HCT116 (cell line): ENCODE measurements at regions of chr1 and their contacts with region 1.

Region 1: GRCh38 chr1:219066631-219067349 is 106.9 kb upstream of the LYPLAL1 start:
- DNase-seq: peak; percentile 33
- ATAC-seq: peak; percentile 77
- H3K4me3 ChIP-seq: no peak overlapping the region
- H3K27ac ChIP-seq: no peak overlapping the region
- H3K4me1 ChIP-seq: peaks cover 0 to 8% of the 10 kb centered on the region in 2 experiments; a peak in 1 of 4 replicates
- H3K27me3 ChIP-seq: no peaks in the 10 kb centered on the region
- CTCF ChIP-seq: peak; percentile 38 to 66 (median 60); a peak in 4 of 6 replicates
- POLR2A ChIP-seq: no peak
- RAD21 ChIP-seq: peak; percentile 77

Region 2: DNA sequence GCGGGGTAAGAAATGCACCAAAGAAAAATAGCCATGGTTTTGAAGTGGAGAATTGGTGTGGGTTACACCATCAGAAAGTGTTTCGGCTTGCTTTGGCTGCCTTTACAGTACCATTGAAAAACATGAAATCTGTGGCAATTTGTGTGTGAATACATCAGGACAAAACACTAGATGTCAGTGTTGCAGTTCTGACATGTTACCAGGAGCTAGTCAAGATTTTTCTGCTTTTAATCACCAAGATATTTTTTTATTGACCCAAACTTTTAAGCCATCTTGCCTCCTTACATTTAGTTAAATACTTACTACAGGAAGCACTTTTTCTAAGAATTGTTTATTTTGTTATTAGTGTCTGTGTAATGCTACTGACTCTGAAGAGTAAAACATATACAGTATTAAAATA is 767.4 kb before region 1 on chr1:
- CTCF ChIA-PET with region 1: interaction called, 5 read pairs
- POLR2A ChIA-PET with region 1: interaction called, 3 read pairs
- RAD21 ChIA-PET with region 1: interaction called in 1 of 2 experiments, 3 read pairs
- intact Hi-C with region 1: loop called (anchors 1 kb)
- DNase-seq: peak; percentile 28
- ATAC-seq: peak; percentile 70
- H3K4me3 ChIP-seq: no peak overlapping the region
- H3K27ac ChIP-seq: no peak overlapping the region
- H3K4me1 ChIP-seq: no peaks in the 10 kb centered on the region
- H3K27me3 ChIP-seq: no peaks in the 10 kb centered on the region
- CTCF ChIP-seq: peak; percentile 36 to 53 (median 44); a peak in 5 of 6 replicates
- POLR2A ChIP-seq: no peak
- RAD21 ChIP-seq: peak; percentile 60

Region 3: DNA sequence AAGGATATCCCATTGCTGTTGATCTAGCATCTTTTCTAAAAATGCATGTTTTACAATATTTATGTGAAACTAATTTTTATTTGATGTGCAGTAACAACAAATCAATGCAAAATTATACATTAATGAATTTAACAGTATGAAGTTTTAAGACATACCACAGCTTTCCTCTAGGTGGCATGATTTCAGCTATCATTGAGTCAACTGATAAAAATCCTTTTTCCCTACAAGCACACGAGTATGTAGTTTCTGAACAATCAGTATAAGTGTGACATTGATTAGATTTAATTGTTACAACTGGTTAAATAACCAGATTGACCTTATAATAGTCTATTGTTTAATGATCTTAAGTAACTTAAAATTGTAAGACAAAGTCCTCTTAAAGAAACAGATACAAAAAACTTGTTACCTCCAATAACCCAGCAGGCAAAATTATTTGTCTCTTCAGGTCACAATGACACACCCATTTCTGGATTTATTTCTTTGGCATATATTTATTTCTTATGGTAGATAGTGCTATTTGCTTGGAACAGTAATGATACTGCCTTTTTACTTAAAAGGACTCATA is 727.4 kb before region 1 on chr1:
- CTCF ChIA-PET with region 1: interaction called, 25 read pairs
- POLR2A ChIA-PET with region 1: no interaction called
- RAD21 ChIA-PET with region 1: no interaction called
- intact Hi-C with region 1: loop called (anchors 2 kb)
- DNase-seq: no peak
- ATAC-seq: 0 out of 2 replicates have a peak, but pooled peaks have one; percentile 36
- H3K4me3 ChIP-seq: no peak overlapping the region
- H3K27ac ChIP-seq: no peak overlapping the region
- H3K4me1 ChIP-seq: no peaks in the 10 kb centered on the region
- H3K27me3 ChIP-seq: no peaks in the 10 kb centered on the region
- CTCF ChIP-seq: peak; percentile 61 to 73 (median 65); a peak in 5 of 6 replicates
- POLR2A ChIP-seq: no peak
- RAD21 ChIP-seq: peak; percentile 81

Region 4: DNA sequence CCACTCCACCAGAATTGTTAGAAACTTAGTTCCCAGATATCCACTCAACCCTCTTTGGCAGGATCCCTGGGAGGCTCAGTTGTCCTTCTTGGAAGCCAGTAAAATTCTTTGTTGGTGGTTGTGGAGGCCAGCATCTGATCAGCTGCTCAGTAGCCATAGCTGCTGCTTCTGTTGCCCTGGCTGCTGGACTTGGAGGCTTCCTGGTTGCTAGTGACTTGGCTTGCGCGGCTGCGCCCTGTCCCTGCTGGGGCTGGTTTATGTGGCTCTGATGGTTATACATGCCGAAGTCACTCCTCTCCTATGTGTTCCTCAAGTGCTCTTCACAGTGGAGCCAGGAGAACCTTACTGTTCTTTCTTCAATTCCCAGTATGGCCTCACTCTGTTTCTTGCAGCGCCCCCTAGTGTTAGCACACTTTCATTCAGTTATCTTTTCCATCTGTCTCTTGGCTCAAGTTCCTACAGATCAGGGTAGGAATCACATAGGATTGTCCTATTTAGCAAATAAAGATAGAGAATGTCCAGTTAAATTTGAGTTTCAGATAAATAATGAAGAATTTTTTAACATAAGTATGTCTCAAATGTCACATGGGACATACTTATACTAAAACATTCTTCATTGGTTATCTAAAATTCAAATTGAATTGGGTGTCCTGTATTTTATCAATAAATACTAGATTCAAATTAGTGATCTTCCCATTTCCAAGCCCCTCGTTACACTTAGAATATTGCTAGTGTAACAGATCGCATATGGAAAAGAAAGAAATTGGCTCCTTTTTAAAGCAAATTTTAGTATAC is 545.2 kb before region 1 on chr1:
- CTCF ChIA-PET with region 1: interaction called, 3 read pairs
- POLR2A ChIA-PET with region 1: no interaction called
- RAD21 ChIA-PET with region 1: no interaction called
- intact Hi-C with region 1: loop called (anchors 5 kb)
- DNase-seq: peak; percentile 41
- ATAC-seq: peak; percentile 74
- H3K4me3 ChIP-seq: no peak overlapping the region
- H3K27ac ChIP-seq: no peak overlapping the region
- H3K4me1 ChIP-seq: no peaks in the 10 kb centered on the region
- H3K27me3 ChIP-seq: no peaks in the 10 kb centered on the region
- CTCF ChIP-seq: peak; percentile 51 to 93 (median 76)
- POLR2A ChIP-seq: no peak
- RAD21 ChIP-seq: peak; percentile 81

Region 5: DNA sequence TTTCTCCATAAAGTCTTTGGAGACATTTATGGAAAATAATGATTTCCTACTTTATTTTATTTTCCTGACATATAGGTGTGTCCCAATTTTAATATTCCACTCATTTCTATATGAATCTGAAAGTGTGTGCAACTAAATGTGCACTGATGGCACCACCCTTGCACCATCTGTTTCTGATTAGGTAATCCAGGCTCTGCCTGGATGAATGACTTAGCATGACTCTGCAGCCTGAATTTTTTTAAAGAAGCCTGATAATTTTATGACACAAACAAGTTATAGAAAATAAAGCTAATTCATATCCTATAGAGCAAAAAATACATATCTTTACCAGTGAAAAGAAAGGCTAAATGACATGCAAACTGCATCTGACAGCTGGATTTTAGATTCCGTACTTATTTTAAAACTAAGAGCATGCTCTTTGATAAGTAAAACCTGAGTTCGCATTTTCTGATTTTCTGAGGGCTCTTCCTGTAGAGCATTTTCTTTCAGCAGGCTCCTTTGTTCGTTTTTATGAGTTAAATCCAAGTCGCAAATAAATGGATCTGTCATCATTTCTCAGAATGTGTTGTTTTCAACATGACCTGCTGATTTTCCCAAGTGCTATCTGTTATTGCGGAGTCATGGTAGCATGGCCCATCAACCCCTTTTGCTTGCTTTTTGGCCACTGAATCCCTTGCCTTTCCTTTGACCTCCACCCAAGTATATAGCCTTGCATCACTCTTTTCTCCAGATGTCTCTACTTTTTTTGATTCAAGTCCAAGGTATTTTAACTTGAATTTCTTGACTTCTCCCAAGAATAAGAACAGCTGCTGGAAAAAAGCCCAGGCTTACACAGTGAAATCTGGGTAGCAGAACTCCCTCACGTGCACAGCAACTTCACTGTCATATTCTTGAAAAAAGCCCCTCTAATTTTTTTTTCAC is 54.1 kb after region 1 on chr1:
- CTCF ChIA-PET with region 1: no interaction called
- POLR2A ChIA-PET with region 1: no interaction called
- RAD21 ChIA-PET with region 1: no interaction called
- intact Hi-C with region 1: no loop called
- DNase-seq: no peak
- ATAC-seq: no peak
- H3K4me3 ChIP-seq: no peak overlapping the region
- H3K27ac ChIP-seq: no peak overlapping the region
- H3K4me1 ChIP-seq: no peaks in the 10 kb centered on the region
- H3K27me3 ChIP-seq: no peaks in the 10 kb centered on the region
- CTCF ChIP-seq: no peak
- POLR2A ChIP-seq: no peak
- RAD21 ChIP-seq: no peak

Region 6: DNA sequence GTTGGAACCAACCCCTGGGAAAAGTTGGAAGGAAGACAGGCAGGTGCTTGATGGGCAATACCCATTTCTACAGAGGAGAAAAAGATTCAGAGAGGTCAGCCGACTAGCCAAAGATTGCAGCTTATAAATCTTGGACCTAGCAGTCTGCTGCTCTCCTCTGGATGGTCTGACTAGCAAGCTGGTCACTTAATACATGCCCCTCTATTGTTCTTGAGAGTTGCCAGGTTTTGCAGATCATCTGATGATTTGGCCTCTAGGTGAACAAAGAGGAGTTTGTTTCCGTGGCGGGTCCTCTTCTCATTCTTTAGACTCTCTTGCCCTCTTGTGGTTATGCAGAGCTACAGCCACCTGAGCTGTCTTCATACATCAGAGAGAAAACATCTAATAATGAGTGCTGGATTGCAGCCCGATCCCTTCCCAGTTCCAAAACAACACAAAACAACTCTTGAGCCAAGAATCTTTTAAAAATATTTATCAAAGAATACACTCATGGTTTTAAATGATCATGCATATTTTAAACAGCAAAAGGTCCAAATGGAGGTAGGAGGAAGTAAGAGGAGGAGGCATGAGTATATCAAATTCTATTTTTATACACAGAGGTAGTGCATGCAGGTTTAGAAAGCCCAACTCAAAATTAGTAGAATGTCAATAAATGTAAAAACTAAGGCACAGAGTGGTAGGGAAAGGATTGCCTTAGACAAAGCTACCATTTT is 745.9 kb after region 1 on chr1:
- CTCF ChIA-PET with region 1: interaction called, 5 read pairs
- POLR2A ChIA-PET with region 1: no interaction called
- RAD21 ChIA-PET with region 1: no interaction called
- intact Hi-C with region 1: loop called (anchors 5 kb)
- DNase-seq: peak; percentile 75
- ATAC-seq: peak; percentile 95
- H3K4me3 ChIP-seq: no peak overlapping the region
- H3K27ac ChIP-seq: no peak overlapping the region
- H3K4me1 ChIP-seq: peaks cover 0 to 6% of the 10 kb centered on the region in 2 experiments; a peak in 1 of 4 replicates
- H3K27me3 ChIP-seq: peaks cover 59% of the 10 kb centered on the region; the same call in 1 of the 2 replicates
- CTCF ChIP-seq: peak; percentile 84 to 94 (median 85)
- POLR2A ChIP-seq: no peak
- RAD21 ChIP-seq: peak; percentile 94